ENCODE measurements at regions of chr19 and their contacts with region 1.

Region 1: GRCh38 chr19:38849860-38850435 is at the start of gene HNRNPL:
- H3K4me3 ChIP-seq: peak within 1 kb of the TSS; percentile 57
- H3K27ac ChIP-seq: peak within 1 kb of the TSS; percentile 100
- H3K4me1 ChIP-seq: peaks cover 32% of the 10 kb centered on the region
- CTCF ChIP-seq: peak; percentile 100

Region 2: DNA sequence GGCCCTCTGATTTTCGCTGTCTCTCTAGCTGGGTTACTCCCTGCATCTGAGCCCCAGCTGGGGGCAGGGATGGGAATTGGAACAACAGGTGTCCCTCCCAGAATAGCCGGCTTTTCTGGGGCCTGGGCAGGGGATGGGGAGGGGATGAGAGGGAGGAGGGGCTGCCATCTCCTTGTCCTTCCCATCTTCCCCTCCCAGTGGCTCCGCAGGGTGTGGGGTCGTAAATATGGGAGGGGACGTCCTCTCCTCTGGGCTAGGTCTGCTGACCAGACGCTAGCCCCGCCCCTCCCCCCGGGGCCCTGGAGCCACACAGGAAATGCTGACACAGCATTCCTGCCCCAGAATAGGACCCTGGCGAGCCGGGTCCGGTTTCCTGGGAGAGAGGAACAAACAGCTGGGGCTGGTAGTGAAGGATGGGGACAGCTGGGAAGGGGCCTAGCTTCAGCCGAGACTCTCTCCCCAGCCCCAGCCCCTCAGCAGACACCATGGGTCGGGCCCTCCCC is 415.3 kb before region 1 on chr19:
- CTCF ChIA-PET with region 1: no interaction called
- POLR2A ChIA-PET with region 1: interaction called, 11 read pairs
- H3K4me3 ChIP-seq: no peak overlapping the region
- H3K27ac ChIP-seq: no peak overlapping the region
- H3K4me1 ChIP-seq: peaks cover 12% of the 10 kb centered on the region
- CTCF ChIP-seq: no peak

Region 3: GRCh38 chr19:38683393-38684080 is 166.4 kb before region 1 on chr19:
- CTCF ChIA-PET with region 1: no interaction called
- POLR2A ChIA-PET with region 1: interaction called, 10 read pairs
- H3K4me3 ChIP-seq: no peak overlapping the region
- H3K27ac ChIP-seq: peak overlapping the region; percentile 98
- H3K4me1 ChIP-seq: peaks cover 41% of the 10 kb centered on the region
- CTCF ChIP-seq: no peak

Region 4: GRCh38 chr19:38769635-38770211 is 80.2 kb before region 1 on chr19:
- CTCF ChIA-PET with region 1: interaction called, 3 read pairs
- POLR2A ChIA-PET with region 1: interaction called, 10 read pairs
- H3K4me3 ChIP-seq: no peak overlapping the region
- H3K27ac ChIP-seq: peak overlapping the region; percentile 52; the same call in 1 of the 2 replicates
- H3K4me1 ChIP-seq: no peaks in the 10 kb centered on the region
- CTCF ChIP-seq: peak; percentile 46; the same call in 1 of the 2 replicates

Region 5: DNA sequence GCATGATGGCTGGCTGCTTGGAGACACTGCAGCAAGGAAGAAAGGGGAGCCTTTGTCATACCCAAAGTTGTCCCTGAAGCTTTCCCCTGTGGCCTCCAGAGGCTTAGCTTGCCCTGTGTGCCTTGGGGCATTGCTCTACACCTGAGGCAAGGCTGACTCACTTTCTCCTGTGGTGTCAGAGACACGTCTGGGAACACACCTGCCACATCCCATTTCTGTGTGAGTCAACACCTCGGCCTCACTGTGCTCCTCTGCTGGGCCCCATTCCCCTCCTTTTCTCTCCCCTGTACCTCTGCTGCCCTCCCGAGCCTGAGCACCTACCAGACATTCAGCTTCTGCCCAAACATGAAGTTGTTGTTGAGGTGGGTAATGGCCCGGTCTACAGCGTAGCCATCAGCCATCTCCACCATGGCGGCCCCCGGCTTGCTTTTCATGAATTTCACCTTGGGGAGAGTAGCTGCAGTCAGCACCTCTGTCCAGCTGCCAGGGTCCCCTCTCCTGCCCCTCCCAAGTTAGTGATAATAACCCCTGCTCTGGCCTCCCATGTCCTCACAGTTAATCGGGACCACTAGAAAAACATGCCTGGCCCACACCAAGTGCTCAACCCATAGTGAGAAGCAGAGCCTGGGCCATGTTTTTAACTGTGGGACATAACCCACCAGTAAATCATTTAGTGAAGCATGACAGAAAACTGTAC is 11.2 kb before region 1 on chr19:
- CTCF ChIA-PET with region 1: no interaction called
- POLR2A ChIA-PET with region 1: interaction called, 159 read pairs
- H3K4me3 ChIP-seq: no peak overlapping the region
- H3K27ac ChIP-seq: peak overlapping the region; percentile 63
- H3K4me1 ChIP-seq: no peaks in the 10 kb centered on the region
- CTCF ChIP-seq: no peak

Region 6: DNA sequence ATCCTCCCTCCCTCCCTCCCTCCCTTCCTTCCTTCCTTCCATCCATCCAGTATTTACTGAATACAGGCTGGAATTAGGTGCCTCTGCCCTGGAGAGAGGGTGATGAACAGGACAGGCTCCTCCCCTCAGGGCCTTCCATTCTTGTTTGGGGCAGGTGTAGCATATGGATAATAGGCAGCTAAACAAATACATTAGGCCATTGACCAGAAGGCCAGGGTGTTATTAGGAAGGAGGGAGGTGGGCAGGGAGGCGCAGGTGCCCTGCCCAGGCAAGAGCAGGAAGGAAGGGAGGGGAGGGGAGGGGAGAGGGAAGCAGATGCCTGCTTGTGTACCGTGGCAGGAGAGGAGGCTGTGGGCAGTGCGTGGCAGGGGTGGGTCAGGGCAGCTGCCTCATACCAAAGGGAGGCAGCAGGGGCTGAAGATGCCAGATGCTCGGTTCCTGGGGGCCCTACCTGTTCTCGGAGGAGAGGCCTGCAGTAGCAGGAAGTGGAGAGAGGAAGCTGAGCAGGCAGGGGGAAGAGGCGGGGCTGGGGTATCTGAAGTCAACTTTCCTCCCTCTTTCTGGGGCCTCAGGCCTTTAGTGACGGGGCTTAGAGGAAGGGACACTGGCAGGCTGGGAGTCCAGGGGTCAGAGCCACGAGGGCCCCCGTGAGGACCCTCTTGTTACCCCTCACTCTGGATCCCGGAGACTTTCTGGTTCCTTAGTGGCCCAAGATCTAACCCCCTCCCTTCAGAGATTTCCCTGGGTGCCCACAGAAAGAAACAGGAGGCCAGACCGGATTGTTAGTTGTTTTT is 28.0 kb after region 1 on chr19 and contains the start of gene RINL:
- CTCF ChIA-PET with region 1: interaction called, 4 read pairs
- POLR2A ChIA-PET with region 1: interaction called, 22 read pairs
- H3K4me3 ChIP-seq: peak within 1 kb of the TSS; percentile 25
- H3K27ac ChIP-seq: peak within 1 kb of the TSS; percentile 71
- H3K4me1 ChIP-seq: peaks cover 8% of the 10 kb centered on the region
- CTCF ChIP-seq: no peak

Region 7: GRCh38 chr19:38899447-38900219 is 49.7 kb after region 1 on chr19 and contains the starts of genes NFKBIB and SIRT2:
- CTCF ChIA-PET with region 1: interaction called, 3 read pairs
- POLR2A ChIA-PET with region 1: interaction called, 29 read pairs
- H3K4me3 ChIP-seq: peak within 1 kb of the TSS; percentile 58
- H3K27ac ChIP-seq: peak within 1 kb of the TSS; percentile 85
- H3K4me1 ChIP-seq: peaks cover 21% of the 10 kb centered on the region
- CTCF ChIP-seq: peak; percentile 59; the same call in 1 of the 2 replicates

Region 8: DNA sequence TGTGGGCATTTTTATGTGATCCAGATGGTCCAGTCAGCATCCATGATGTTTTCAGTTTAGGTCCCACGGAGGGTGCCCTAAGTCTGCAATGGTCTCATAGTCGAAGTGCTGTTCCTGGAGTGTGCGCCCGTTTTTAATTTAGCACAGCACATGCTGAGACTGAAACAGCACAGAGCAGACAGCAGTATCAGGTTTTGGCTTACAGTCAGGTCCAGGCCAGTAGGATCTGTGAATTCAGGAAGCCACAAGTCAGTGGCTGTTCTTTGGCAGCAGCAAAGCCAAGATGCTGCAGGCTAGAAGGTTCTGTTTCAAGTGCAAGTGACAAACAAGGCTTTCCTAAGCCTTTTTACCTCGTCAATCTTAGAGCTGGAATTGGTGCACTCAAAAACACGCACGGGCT is 164.1 kb after region 1 on chr19:
- CTCF ChIA-PET with region 1: no interaction called
- POLR2A ChIA-PET with region 1: no interaction called
- H3K4me3 ChIP-seq: no peak overlapping the region
- H3K27ac ChIP-seq: no peak overlapping the region
- H3K4me1 ChIP-seq: no peaks in the 10 kb centered on the region
- CTCF ChIP-seq: no peak

Measured in HEK293 (cell line).